CD4-positive, alpha-beta T cell (primary cell): ENCODE measurements at regions of chr6 and their contacts with region 1.

Region 1: DNA sequence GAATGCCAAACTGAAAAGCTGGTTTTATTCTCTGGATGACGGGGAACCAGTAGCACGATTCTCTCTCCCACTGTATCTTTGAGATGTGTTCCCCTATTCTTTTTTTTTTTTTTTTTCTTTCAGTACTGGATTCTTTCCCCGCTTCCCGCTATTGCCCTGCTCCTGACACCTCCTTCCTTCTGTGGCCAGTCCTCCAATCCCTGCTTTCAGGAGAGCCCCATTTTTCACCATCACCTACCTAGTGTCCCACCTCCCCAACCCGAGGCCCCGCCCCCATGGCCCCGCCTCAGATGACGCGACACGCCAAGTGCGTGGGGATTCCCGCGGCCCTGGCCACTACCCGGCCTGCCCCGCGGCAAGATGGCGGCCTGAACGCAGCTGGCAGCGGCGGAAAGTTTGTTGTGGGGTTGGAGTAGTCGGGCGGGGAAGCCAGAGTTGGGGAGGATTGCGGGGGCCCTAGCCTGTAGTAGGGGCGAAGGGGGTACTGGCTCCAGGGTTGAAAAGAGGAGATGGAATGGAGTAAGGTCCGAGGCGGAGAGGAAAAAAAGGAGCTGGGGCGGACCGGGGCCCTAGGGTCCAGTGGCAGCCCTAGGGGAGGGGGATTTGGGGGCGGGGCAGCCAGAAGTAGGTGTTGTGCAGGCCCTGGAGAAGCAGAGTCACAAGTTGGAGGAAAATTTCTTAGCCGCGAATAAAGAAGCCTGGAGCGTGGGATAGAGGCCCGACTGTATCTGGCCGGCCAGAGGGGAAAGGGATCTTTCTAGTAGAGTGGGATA is at the start of gene TJAP1:
- DNase-seq: peak; percentile 91 to 99 (median 96)
- ATAC-seq: peak; percentile 100
- H3K4me3 ChIP-seq: peak within 1 kb of the TSS; percentile 81
- H3K4me3 Mint-ChIP-seq: peak within 1 kb of the TSS; percentile 94
- H3K27ac ChIP-seq: peak within 1 kb of the TSS; percentile 81 to 91
- H3K27ac Mint-ChIP-seq: peak within 1 kb of the TSS; percentile 96
- H3K4me1 ChIP-seq: peaks cover 32% of the 10 kb centered on the region
- H3K4me1 Mint-ChIP-seq: peaks cover 46% of the 10 kb centered on the region
- H3K27me3 ChIP-seq: no peaks in the 10 kb centered on the region
- H3K27me3 Mint-ChIP-seq: no peaks in the 10 kb centered on the region
- CTCF ChIP-seq: no peak
- total RNA-seq, gene TJAP1: 23.6 to 24.4 TPM

Region 2: GRCh38 chr6:42704241-42704936 is 773.0 kb before region 1 on chr6:
- CTCF ChIA-PET with region 1: no interaction called
- POLR2A ChIA-PET with region 1: no interaction called
- intact Hi-C with region 1: no loop called
- DNase-seq: no peak
- ATAC-seq: no peak
- H3K4me3 ChIP-seq: no peak overlapping the region
- H3K4me3 Mint-ChIP-seq: no peak overlapping the region
- H3K27ac ChIP-seq: no peak overlapping the region
- H3K27ac Mint-ChIP-seq: no peak overlapping the region
- H3K4me1 ChIP-seq: no peaks in the 10 kb centered on the region
- H3K4me1 Mint-ChIP-seq: no peaks in the 10 kb centered on the region
- H3K27me3 ChIP-seq: no peaks in the 10 kb centered on the region
- H3K27me3 Mint-ChIP-seq: no peaks in the 10 kb centered on the region
- CTCF ChIP-seq: no peak

Region 3: DNA sequence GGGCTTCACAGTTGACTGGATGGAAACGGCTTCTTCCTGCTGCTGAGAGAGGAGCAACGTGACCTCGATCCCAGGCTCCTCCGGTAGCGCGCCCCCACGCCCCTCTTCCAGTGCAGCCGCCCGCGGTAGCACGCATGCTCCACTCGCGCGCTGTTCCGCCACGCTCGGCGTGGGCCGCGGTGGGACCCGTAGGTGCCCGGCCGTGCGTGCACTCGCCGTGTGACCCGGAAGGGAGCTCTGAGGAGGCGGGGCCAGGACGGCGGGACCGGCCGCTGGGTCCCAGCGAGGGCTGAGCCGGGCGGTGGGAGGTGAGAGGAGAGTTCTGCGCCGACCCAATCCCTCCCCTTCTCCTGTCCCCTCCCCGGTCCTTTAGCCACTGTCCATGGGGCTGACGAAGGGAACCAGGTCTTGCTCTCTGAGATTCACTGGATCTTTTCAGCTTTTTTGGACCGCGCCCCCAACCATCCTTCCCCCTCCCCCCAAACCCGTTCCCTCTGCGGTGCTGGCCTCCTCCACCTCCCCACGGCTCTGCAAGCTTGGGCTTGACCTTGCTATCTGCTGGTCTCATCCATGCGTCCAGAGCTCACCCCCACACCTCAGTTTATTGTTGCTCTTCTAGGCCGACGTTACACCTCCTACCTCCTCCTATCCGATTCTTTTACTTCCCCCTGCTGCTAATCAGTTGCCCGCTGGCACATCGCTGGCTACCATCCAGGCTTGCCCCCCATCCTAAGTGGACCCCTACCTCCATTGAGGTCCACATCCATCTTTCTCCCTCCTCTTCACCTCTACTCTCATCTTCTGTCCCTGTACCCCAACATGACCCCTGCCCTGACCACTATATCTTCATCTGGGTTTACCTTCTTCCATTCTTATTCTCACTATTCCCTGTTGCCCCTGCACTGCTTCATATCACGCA is 295.2 kb before region 1 on chr6 and contains the start of gene CUL9:
- CTCF ChIA-PET with region 1: no interaction called
- POLR2A ChIA-PET with region 1: no interaction called
- intact Hi-C with region 1: loop called in 1 of 2 experiments (anchors 5 kb)
- DNase-seq: peak; percentile 45 to 90 (median 74)
- ATAC-seq: peak; percentile 87
- H3K4me3 ChIP-seq: peak within 1 kb of the TSS; percentile 86
- H3K4me3 Mint-ChIP-seq: peak within 1 kb of the TSS; percentile 92
- H3K27ac ChIP-seq: peak within 1 kb of the TSS; percentile 64 to 68
- H3K27ac Mint-ChIP-seq: peak within 1 kb of the TSS; percentile 75
- H3K4me1 ChIP-seq: peaks cover 53% of the 10 kb centered on the region
- H3K4me1 Mint-ChIP-seq: peaks cover 56% of the 10 kb centered on the region
- H3K27me3 ChIP-seq: no peaks in the 10 kb centered on the region
- H3K27me3 Mint-ChIP-seq: no peaks in the 10 kb centered on the region
- CTCF ChIP-seq: no peak
- total RNA-seq, gene CUL9: 75.5 to 79.2 TPM

Region 4: DNA sequence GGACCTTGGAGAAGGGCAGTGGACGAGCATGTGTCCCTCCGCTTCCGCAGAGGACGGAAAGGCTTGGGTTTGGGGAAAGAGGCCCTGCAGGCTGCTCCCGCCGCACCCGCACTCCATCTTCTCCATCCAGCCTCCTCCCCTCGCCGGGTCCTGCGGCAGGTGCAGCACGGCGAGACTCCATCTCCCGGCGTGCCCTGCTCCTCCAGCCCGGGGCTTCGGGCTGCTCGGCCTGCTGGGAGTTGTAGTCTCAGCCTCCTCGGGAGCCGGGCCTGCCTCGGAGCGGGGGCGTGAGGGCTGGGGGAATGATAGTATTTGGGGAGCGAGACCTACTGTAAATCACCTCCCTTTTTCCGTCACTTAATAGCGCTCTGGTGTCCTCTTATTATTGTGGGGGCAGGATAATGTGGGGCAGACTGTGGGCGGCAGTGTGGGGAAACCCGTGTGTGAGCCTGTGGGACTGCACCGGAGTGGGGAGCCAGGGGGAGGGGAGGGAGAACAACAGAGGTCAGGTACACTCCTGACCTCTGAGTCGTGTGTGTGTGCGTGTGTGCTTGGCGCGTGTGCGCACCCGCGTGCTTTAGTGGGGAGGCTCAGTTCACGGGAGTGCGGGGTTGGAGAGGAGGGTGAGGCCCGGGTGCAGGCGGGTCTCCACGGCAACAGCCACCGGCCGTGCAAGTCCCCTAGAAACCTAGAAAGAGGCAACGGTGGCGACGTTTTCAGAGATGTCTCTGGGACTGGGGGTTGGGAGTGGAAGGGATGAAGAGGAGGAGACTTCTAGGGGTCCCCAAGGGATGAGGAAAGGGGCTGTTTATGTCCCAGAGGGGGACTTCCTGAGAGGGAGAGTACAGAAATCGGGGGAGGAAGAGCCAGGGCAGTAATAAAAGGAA is 230.1 kb before region 1 on chr6:
- CTCF ChIA-PET with region 1: no interaction called
- POLR2A ChIA-PET with region 1: no interaction called
- intact Hi-C with region 1: loop called in 1 of 2 experiments (anchors 5 kb)
- DNase-seq: peak; percentile 65 to 89 (median 76)
- ATAC-seq: peak; percentile 97
- H3K4me3 ChIP-seq: peak overlapping the region; percentile 58
- H3K4me3 Mint-ChIP-seq: no peak overlapping the region
- H3K27ac ChIP-seq: peak overlapping the region; percentile 24 to 42
- H3K27ac Mint-ChIP-seq: peak overlapping the region; percentile 70
- H3K4me1 ChIP-seq: peaks cover 26% of the 10 kb centered on the region
- H3K4me1 Mint-ChIP-seq: peaks cover 22% of the 10 kb centered on the region
- H3K27me3 ChIP-seq: peaks cover 34 to 35% of the 10 kb centered on the region in 2 experiments
- H3K27me3 Mint-ChIP-seq: peaks cover 15% of the 10 kb centered on the region
- CTCF ChIP-seq: no peak

Region 5: GRCh38 chr6:43454696-43455530 is 22.5 kb before region 1 on chr6:
- CTCF ChIA-PET with region 1: interaction called, 5 read pairs
- POLR2A ChIA-PET with region 1: interaction called, 13 read pairs
- intact Hi-C with region 1: loop called in 1 of 2 experiments (anchors 2 kb)
- DNase-seq: peak in 10 of 14 experiments; percentile 13 to 75 (median 43)
- ATAC-seq: peak; percentile 61
- H3K4me3 ChIP-seq: peak overlapping the region; percentile 73
- H3K4me3 Mint-ChIP-seq: peak overlapping the region; percentile 81
- H3K27ac ChIP-seq: peak overlapping the region in 1 of 2 donors; percentile 23
- H3K27ac Mint-ChIP-seq: peak overlapping the region; percentile 61
- H3K4me1 ChIP-seq: peaks cover 19% of the 10 kb centered on the region
- H3K4me1 Mint-ChIP-seq: peaks cover 21% of the 10 kb centered on the region
- H3K27me3 ChIP-seq: no peaks in the 10 kb centered on the region
- H3K27me3 Mint-ChIP-seq: no peaks in the 10 kb centered on the region
- CTCF ChIP-seq: peak; percentile 54

Region 6: GRCh38 chr6:43496370-43497128 is 19.1 kb after region 1 on chr6:
- CTCF ChIA-PET with region 1: no interaction called
- POLR2A ChIA-PET with region 1: interaction called, 13 read pairs
- intact Hi-C with region 1: no loop called
- DNase-seq: peak in 2 of 14 experiments; percentile 36 to 45
- ATAC-seq: peak; percentile 53
- H3K4me3 ChIP-seq: no peak overlapping the region
- H3K4me3 Mint-ChIP-seq: no peak overlapping the region
- H3K27ac ChIP-seq: no peak overlapping the region
- H3K27ac Mint-ChIP-seq: no peak overlapping the region
- H3K4me1 ChIP-seq: peaks cover 27% of the 10 kb centered on the region
- H3K4me1 Mint-ChIP-seq: peaks cover 36% of the 10 kb centered on the region
- H3K27me3 ChIP-seq: no peaks in the 10 kb centered on the region
- H3K27me3 Mint-ChIP-seq: no peaks in the 10 kb centered on the region
- CTCF ChIP-seq: no peak

Region 7: GRCh38 chr6:43516697-43517504 is 39.5 kb after region 1 on chr6 and contains the starts of genes POLR1C and YIPF3:
- CTCF ChIA-PET with region 1: no interaction called
- POLR2A ChIA-PET with region 1: interaction called, 14 read pairs
- intact Hi-C with region 1: loop called in 1 of 2 experiments (anchors 5 kb)
- DNase-seq: peak; percentile 91 to 98 (median 96)
- ATAC-seq: peak; percentile 96
- H3K4me3 ChIP-seq: peak within 1 kb of the TSS; percentile 100
- H3K4me3 Mint-ChIP-seq: no peak within 1 kb of the TSS
- H3K27ac ChIP-seq: peak within 1 kb of the TSS; percentile 81 to 90
- H3K27ac Mint-ChIP-seq: no peak within 1 kb of the TSS
- H3K4me1 ChIP-seq: peaks cover 43% of the 10 kb centered on the region
- H3K4me1 Mint-ChIP-seq: peaks cover 33% of the 10 kb centered on the region
- H3K27me3 ChIP-seq: no peaks in the 10 kb centered on the region
- H3K27me3 Mint-ChIP-seq: no peaks in the 10 kb centered on the region
- CTCF ChIP-seq: no peak
- total RNA-seq, gene POLR1C: 46.6 to 47.8 TPM
- total RNA-seq, gene YIPF3: 36.5 to 37.9 TPM

Region 8: DNA sequence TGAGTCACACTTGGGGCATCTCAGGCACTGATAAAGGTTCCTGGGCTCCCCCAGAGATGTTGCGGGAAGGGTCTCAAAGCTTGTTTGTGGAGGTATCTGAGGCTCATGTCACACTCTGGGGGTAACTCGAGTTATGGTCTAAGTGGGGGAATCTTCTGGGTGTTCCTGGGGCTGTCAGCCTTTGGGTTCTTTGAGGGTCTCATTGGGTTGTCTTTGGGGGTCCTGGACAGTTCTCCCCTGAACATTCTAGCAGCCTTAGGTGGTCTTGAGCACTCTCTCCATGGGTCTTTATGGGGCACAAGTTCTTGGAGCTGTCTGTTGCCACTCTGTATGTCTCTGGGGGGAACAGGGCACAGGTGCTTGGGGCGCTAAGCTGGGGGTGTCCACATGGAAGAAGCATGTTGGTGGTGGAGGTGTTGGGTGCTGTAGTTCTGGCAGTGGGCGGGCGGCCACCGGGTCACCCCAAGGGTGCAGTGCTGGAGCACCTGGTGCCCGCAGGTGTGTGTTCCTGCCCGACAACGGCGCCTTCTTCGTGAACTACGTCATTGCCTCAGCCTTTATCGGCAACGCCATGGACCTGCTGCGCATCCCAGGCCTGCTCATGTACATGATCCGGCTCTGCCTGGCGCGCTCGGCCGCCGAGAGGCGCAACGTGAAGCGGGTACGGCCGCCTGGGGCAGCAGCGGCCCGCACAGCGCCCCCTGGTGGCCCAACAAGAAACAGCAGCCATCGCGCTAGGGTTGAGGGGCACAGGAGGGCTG is 674.1 kb after region 1 on chr6:
- CTCF ChIA-PET with region 1: no interaction called
- POLR2A ChIA-PET with region 1: no interaction called
- intact Hi-C with region 1: no loop called
- DNase-seq: peak; percentile 64 to 88 (median 76)
- ATAC-seq: peak; percentile 92
- H3K4me3 ChIP-seq: no peak overlapping the region
- H3K4me3 Mint-ChIP-seq: no peak overlapping the region
- H3K27ac ChIP-seq: no peak overlapping the region
- H3K27ac Mint-ChIP-seq: no peak overlapping the region
- H3K4me1 ChIP-seq: peaks cover 16% of the 10 kb centered on the region
- H3K4me1 Mint-ChIP-seq: peaks cover 4% of the 10 kb centered on the region
- H3K27me3 ChIP-seq: no peaks in the 10 kb centered on the region
- H3K27me3 Mint-ChIP-seq: no peaks in the 10 kb centered on the region
- CTCF ChIP-seq: peak; percentile 98